ENCODE measurements at regions of chr6 and their contacts with region 1.

Region 1: DNA sequence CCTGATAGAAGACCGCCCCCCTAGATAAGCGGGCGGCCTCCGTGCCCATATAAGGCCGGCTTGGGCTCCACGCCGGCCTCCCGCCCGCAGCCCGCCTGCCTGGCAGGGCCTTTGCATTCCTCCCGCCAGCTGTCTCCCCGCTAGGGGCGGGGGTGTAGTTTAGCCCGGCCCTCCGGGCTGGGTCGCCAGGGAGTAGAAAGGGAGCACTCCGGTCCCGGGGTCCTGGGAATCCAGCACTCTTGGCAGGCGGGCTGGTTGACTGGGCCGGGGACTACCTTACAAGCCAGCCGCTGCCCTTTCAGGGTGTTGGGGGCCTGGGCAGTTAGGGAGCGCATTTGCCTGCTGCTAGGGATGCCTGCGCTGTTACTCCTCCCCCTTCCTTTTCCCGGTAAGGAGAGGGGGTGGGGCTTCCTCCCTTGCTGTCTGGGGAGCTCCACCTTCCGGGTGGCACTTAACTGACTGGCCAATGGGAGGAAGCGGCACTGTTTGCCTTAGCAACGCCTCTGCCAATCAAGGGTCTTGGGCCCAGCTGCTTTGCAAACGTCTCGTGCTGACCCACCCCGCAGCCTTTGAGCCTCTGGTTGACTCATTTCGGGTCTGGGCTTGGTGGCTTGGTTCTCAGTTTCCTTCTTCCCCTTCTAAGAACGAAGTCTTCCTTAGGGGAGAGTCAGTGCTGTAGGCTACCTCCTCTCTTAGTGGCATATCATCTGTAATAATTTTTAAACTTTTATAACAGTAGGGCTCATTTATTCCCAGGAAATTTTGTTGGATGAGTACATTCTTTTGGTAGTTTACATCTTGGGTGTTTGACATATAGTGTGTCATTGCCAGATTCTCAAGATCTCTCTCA is 3.4 kb downstream of the SRF start:
- DNase-seq: peak; percentile 66 to 92 (median 88)
- ATAC-seq: peak; percentile 77
- H3K4me3 ChIP-seq: peak overlapping the region; percentile 72
- H3K4me3 Mint-ChIP-seq: peak overlapping the region; percentile 85 to 99 (median 96)
- H3K27ac ChIP-seq: peak overlapping the region; percentile 73
- H3K27ac Mint-ChIP-seq: peak overlapping the region; percentile 90 to 98 (median 94)
- H3K4me1 ChIP-seq: peaks cover 26 to 29% of the 10 kb centered on the region in 2 donors
- H3K4me1 Mint-ChIP-seq: peaks cover 35 to 49% (median 40%) of the 10 kb centered on the region in 7 donors
- H3K27me3 ChIP-seq: no peaks in the 10 kb centered on the region
- H3K27me3 Mint-ChIP-seq: peaks cover 0 to 2% (median 0%) of the 10 kb centered on the region in 5 donors

Region 2: GRCh38 chr6:42217519-42218367 is 956.7 kb before region 1 on chr6 and contains the start of gene MRPS10:
- CTCF ChIA-PET with region 1: no interaction called
- POLR2A ChIA-PET with region 1: no interaction called
- intact Hi-C with region 1: loop called in 1 of 2 experiments (anchors 5 kb)
- DNase-seq: peak; percentile 72 to 92 (median 87)
- ATAC-seq: peak; percentile 100
- H3K4me3 ChIP-seq: peak within 1 kb of the TSS; percentile 96
- H3K4me3 Mint-ChIP-seq: peak within 1 kb of the TSS; percentile 92 to 100 (median 98)
- H3K27ac ChIP-seq: peak within 1 kb of the TSS; percentile 77
- H3K27ac Mint-ChIP-seq: peak within 1 kb of the TSS; percentile 87 to 99 (median 97)
- H3K4me1 ChIP-seq: peaks cover 9 to 14% of the 10 kb centered on the region in 2 donors
- H3K4me1 Mint-ChIP-seq: peaks cover 7 to 34% (median 24%) of the 10 kb centered on the region in 7 donors
- H3K27me3 ChIP-seq: no peaks in the 10 kb centered on the region
- H3K27me3 Mint-ChIP-seq: no peaks in the 10 kb centered on the region
- total RNA-seq, gene MRPS10: 17.0 to 30.3 (median 25.3) TPM

Region 3: DNA sequence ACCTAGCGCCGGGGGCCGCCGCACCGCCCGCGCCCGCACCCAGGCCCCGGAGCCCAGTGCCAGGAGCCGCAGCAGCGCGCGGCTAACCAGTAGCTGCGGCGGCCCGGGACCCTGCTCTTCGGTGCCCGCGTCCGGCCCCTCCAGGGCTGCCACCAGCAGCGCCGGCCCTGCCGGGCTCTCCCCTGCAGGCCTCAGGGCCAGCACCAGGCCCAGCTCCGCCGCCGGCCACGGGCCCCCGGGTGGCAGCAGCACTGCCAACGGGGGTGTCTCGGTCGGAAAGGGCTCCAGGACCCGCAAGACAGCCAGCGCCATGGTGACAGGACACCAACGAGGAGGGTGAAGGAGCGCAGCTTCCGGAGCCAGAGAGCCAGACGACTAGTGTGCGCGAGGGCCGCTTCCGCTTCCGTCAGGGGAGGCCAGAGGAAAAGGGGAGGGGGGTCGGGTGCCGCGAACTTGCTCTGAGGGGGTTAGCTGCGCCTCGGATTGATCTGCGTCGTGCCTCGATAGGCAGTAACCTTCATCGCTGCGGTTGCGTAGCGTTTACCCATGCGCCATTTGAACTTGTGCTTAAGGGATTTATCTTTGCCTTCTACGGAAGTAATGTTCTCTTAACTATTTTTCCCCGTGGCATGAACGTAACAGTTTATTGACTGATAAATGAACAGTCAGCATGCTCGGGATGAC is 195.5 kb before region 1 on chr6 and contains the start of gene PEX6:
- CTCF ChIA-PET with region 1: no interaction called
- POLR2A ChIA-PET with region 1: interaction called, 4 read pairs
- intact Hi-C with region 1: loop called (anchors 1 kb)
- DNase-seq: peak; percentile 77 to 98 (median 93)
- ATAC-seq: peak; percentile 97
- H3K4me3 ChIP-seq: peak within 1 kb of the TSS; percentile 90
- H3K4me3 Mint-ChIP-seq: peak within 1 kb of the TSS; percentile 91 to 99 (median 94)
- H3K27ac ChIP-seq: peak within 1 kb of the TSS; percentile 85
- H3K27ac Mint-ChIP-seq: peak within 1 kb of the TSS; percentile 92 to 99 (median 98)
- H3K4me1 ChIP-seq: peaks cover 30 to 32% of the 10 kb centered on the region in 2 donors
- H3K4me1 Mint-ChIP-seq: peaks cover 19 to 61% (median 47%) of the 10 kb centered on the region in 7 donors
- H3K27me3 ChIP-seq: no peaks in the 10 kb centered on the region
- H3K27me3 Mint-ChIP-seq: no peaks in the 10 kb centered on the region
- total RNA-seq, gene PEX6: 14.1 to 42.3 (median 28.0) TPM

Region 4: DNA sequence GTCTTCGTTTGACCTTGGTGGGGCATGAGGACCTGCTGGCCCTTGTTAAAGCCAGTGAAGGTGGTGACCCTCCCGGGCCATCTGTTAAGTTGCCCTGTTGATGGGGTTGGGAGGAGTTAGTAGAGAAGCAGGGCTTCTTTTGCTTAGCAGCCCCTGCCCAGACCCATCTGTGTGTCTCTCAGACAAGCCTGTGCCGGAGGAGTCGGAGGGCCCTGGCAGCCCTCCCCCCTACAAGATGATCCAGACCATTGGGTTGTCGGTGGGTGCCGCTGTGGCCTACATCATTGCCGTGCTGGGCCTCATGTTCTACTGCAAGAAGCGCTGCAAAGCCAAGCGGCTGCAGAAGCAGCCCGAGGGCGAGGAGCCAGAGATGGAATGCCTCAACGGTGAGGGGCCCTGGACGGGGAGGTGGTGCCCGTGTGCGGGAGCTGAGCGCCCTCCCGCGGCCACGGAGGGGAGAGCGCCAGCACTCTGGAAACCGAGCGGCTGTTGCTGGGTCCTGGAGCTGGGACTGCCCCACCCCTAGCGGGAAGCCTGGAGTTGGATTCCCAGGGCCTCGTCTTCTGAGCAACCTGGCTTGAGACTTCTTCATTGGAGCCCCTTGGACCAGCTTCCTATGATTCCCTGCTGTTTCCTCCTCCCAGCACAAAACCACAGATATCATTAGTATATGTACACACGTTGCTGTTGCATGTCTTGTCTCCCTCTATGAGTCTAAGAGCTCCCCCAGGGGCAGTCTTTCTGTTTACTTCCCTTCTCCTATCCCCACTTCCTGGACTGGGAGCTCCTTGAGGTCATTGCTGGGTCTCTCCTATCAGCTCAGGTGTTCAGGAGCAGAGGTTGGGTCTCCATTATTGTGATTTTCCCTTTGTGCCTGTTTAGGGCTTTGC is 31.0 kb before region 1 on chr6:
- CTCF ChIA-PET with region 1: no interaction called
- POLR2A ChIA-PET with region 1: interaction called, 3 read pairs
- intact Hi-C with region 1: loop called in 1 of 2 experiments (anchors 1 kb)
- DNase-seq: peak; percentile 62 to 85 (median 76)
- ATAC-seq: peak; percentile 95
- H3K4me3 ChIP-seq: peak overlapping the region; percentile 0
- H3K4me3 Mint-ChIP-seq: peak overlapping the region in 8 of 10 donors; percentile 25 to 63 (median 38)
- H3K27ac ChIP-seq: no peak overlapping the region
- H3K27ac Mint-ChIP-seq: peak overlapping the region in 5 of 9 donors; percentile 30 to 86 (median 51)
- H3K4me1 ChIP-seq: peaks cover 11 to 21% of the 10 kb centered on the region in 2 donors
- H3K4me1 Mint-ChIP-seq: peaks cover 5 to 21% (median 16%) of the 10 kb centered on the region in 7 donors
- H3K27me3 ChIP-seq: no peaks in the 10 kb centered on the region
- H3K27me3 Mint-ChIP-seq: no peaks in the 10 kb centered on the region

Region 5: DNA sequence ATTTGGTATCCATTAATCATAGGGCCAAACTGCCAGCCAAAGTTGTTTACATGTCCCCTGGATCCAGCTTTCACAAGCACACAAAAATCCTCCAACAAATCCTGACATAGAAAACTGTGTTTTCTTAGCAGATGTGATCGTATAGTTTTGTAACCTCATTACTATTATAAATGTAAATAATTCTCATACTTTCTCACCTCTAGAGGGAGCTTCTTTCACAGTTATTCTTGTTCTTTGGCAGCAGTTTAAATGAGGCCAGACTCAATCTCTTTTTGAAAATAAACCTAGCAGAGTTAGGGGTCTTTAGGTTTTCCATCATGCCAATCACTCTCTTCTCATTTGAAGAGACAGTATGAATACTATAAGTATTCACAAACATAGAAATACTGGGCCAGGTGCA is 212.0 kb after region 1 on chr6:
- CTCF ChIA-PET with region 1: no interaction called
- POLR2A ChIA-PET with region 1: no interaction called
- intact Hi-C with region 1: loop called (anchors 2 to 5 kb)
- DNase-seq: peak in 3 of 9 donors; percentile 43 to 64 (median 44)
- ATAC-seq: no peak
- H3K4me3 ChIP-seq: no peak overlapping the region
- H3K4me3 Mint-ChIP-seq: peak overlapping the region in 4 of 10 donors; percentile 23 to 63 (median 40)
- H3K27ac ChIP-seq: no peak overlapping the region
- H3K27ac Mint-ChIP-seq: peak overlapping the region in 8 of 9 donors; percentile 6 to 95 (median 73)
- H3K4me1 ChIP-seq: peaks cover 46 to 59% of the 10 kb centered on the region in 2 donors
- H3K4me1 Mint-ChIP-seq: peaks cover 54 to 78% (median 72%) of the 10 kb centered on the region in 7 donors
- H3K27me3 ChIP-seq: no peaks in the 10 kb centered on the region
- H3K27me3 Mint-ChIP-seq: peaks cover 0 to 67% (median 4%) of the 10 kb centered on the region in 5 donors

Region 6: GRCh38 chr6:43629505-43630300 is 455.2 kb after region 1 on chr6:
- CTCF ChIA-PET with region 1: no interaction called
- POLR2A ChIA-PET with region 1: no interaction called
- intact Hi-C with region 1: loop called (anchors 1 to 5 kb)
- DNase-seq: peak; percentile 64 to 90 (median 75)
- ATAC-seq: peak; percentile 79
- H3K4me3 ChIP-seq: peak overlapping the region; percentile 98
- H3K4me3 Mint-ChIP-seq: peak overlapping the region; percentile 97 to 100 (median 99)
- H3K27ac ChIP-seq: peak overlapping the region; percentile 76
- H3K27ac Mint-ChIP-seq: peak overlapping the region; percentile 90 to 99 (median 98)
- H3K4me1 ChIP-seq: peaks cover 9 to 11% of the 10 kb centered on the region in 2 donors
- H3K4me1 Mint-ChIP-seq: peaks cover 30 to 42% (median 38%) of the 10 kb centered on the region in 7 donors
- H3K27me3 ChIP-seq: no peaks in the 10 kb centered on the region
- H3K27me3 Mint-ChIP-seq: no peaks in the 10 kb centered on the region